ENCODE measurements at regions of chr3 and their contacts with region 1.

Region 1: GRCh38 chr3:150546226-150547044 is at the starts of genes EIF2A and SERP1:
- DNase-seq: peak; percentile 97
- ATAC-seq: peak; percentile 98
- H3K4me3 ChIP-seq: peak within 1 kb of the TSS; percentile 94 to 99 (median 97)
- H3K27ac ChIP-seq: peak within 1 kb of the TSS; percentile 97
- H3K4me1 ChIP-seq: peaks cover 60% of the 10 kb centered on the region
- H3K27me3 ChIP-seq: peaks cover 0 to 7% of the 10 kb centered on the region in 2 experiments; a peak in 1 of 5 replicates
- CTCF ChIP-seq: peak; percentile 11; the same call in 1 of the 2 replicates
- EP300 ChIP-seq: peak in 1 of 2 experiments; percentile 13; a peak in 1 of 4 replicates
- POLR2A ChIP-seq: peak; percentile 93 to 97
- RAD21 ChIP-seq: peak; percentile 57; the same call in 1 of the 2 replicates
- total RNA-seq, gene EIF2A: 124 and 181 TPM in 2 replicates
- total RNA-seq, gene SERP1: 95.0 and 108 TPM in 2 replicates

Region 2: DNA sequence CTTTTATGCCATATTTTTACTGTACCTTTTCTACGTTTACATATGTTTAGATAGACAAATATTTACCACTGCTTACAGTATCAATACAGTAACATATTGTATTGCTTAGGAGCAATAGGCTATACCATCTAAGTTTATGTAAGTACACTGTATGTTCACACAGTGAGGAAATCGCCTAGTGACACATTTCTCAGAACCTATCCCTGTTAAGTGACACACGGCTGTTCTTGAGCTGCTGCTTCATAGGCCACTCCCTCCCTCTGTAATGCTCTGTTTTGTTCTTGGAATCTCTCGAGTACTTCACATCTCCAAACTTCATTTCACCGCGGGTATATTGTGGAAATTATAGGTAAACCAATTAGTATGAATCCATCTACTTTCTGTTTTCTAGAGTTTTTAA is 43.3 kb after region 1 on chr3:
- CTCF ChIA-PET with region 1: no interaction called
- POLR2A ChIA-PET with region 1: no interaction called
- in situ Hi-C with region 1: no loop called
- intact Hi-C with region 1: no loop called
- DNase-seq: no peak
- ATAC-seq: peak; percentile 16; the same call in 1 of the 3 replicates
- H3K4me3 ChIP-seq: no peak overlapping the region
- H3K27ac ChIP-seq: no peak overlapping the region
- H3K4me1 ChIP-seq: no peaks in the 10 kb centered on the region
- H3K27me3 ChIP-seq: no peaks in the 10 kb centered on the region
- CTCF ChIP-seq: no peak
- EP300 ChIP-seq: no peak
- POLR2A ChIP-seq: no peak
- RAD21 ChIP-seq: no peak

Region 3: GRCh38 chr3:150603153-150603979 is 56.9 kb after region 1 on chr3 and contains the start of gene SELENOT:
- CTCF ChIA-PET with region 1: no interaction called
- POLR2A ChIA-PET with region 1: interaction called, 21 read pairs
- in situ Hi-C with region 1: loop called (anchors 5 kb)
- intact Hi-C with region 1: no loop called
- DNase-seq: peak; percentile 92
- ATAC-seq: peak; percentile 95
- H3K4me3 ChIP-seq: peak within 1 kb of the TSS; percentile 86 to 89 (median 86)
- H3K27ac ChIP-seq: peak within 1 kb of the TSS; percentile 91
- H3K4me1 ChIP-seq: peaks cover 58% of the 10 kb centered on the region
- H3K27me3 ChIP-seq: no peaks in the 10 kb centered on the region
- CTCF ChIP-seq: peak; percentile 29
- EP300 ChIP-seq: no peak
- POLR2A ChIP-seq: peak; percentile 95
- RAD21 ChIP-seq: 0 out of 2 replicates have a peak, but pooled peaks have one; percentile 35
- total RNA-seq, gene SELENOT: 106 and 122 TPM in 2 replicates

Region 4: DNA sequence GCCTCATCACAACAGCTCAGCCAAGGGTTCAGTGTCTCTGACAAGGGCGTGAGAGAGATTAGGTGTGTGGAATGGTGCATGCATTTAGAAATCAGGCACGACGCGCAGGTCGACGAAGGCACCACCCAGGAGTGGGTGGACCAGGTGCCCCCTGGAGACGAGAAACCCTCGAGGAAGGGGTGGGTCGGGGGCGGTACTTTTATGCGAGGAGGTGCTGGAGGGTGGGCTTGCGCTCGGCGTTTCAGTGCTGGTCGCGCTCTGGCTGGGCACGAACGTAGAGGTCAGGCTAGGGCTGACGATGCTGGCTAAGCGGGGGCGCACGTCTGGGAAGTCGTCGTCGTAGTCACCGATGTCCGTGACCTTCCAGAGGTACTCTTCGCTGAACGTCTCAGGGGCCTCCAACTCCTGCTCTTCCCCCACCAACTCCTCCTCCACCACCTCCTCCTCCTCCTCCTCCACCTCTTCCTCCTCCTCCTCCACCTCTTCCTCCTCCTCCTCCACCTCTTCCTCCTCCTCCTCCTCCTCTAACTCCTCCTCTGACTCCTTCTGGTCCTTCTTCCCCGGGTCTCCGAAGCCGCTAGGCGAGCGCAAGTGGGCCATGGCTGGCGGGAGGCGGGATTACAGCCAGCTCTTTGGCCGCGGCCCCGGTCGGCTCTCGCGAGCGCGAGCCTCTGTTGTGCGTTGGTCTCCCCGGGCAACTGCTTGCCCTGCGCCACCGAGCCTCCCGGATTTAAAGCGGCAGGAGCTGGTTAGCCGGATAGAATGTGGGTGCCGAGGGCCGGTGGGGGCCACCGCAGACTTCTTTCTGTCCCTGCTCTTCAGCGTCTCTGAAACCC is 157.1 kb after region 1 on chr3 and contains the start of gene ERICH6:
- CTCF ChIA-PET with region 1: no interaction called
- POLR2A ChIA-PET with region 1: interaction called, 3 read pairs
- in situ Hi-C with region 1: no loop called
- intact Hi-C with region 1: loop called (anchors 10 kb)
- DNase-seq: peak; percentile 81
- ATAC-seq: peak; percentile 100
- H3K4me3 ChIP-seq: peak within 1 kb of the TSS; percentile 74 to 80 (median 76)
- H3K27ac ChIP-seq: peak within 1 kb of the TSS; percentile 84
- H3K4me1 ChIP-seq: peaks cover 9% of the 10 kb centered on the region
- H3K27me3 ChIP-seq: no peaks in the 10 kb centered on the region; a peak in 1 of 5 replicates
- CTCF ChIP-seq: peak; percentile 40; the same call in 1 of the 2 replicates
- EP300 ChIP-seq: no peak
- POLR2A ChIP-seq: peak; percentile 48 to 55; a peak in 3 of 4 replicates
- RAD21 ChIP-seq: no peak
- total RNA-seq, gene ERICH6: not detected in 2 replicates

Measured in HepG2 (cell line).